ENCODE measurements at regions of chr7 and their contacts with region 1.

Region 1: GRCh38 chr7:73667344-73668102 is at the start of gene VPS37D:
- DNase-seq: peak; percentile 96
- ATAC-seq: peak; percentile 94
- H3K4me3 Mint-ChIP-seq: peak within 1 kb of the TSS; percentile 57
- H3K27ac Mint-ChIP-seq: no peak within 1 kb of the TSS
- H3K4me1 Mint-ChIP-seq: peaks cover 5% of the 10 kb centered on the region
- H3K27me3 Mint-ChIP-seq: peaks cover 40% of the 10 kb centered on the region
- total RNA-seq, gene VPS37D: 0.35 to 0.39 TPM

Region 2: DNA sequence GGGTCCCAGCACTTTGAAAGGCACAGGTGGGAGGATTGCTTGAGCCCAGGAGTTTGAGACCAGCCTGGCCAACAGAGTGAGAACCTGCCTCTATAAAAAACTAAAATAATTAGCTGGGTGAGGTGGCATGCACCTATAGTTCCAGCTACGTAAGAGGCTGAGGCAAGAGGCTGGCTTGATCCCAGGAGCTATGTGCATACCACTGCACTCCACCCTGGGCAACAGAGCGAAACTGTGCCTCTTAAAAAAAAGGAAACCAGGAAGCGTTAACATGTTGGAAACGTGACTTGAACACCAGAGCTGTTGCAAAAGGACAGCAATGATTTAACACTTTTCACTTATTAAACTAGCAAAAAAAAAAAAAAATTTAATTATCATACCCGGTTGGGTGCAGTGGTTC is 158.1 kb before region 1 on chr7:
- CTCF ChIA-PET with region 1: no interaction called
- POLR2A ChIA-PET with region 1: no interaction called
- intact Hi-C with region 1: no loop called
- DNase-seq: no peak
- ATAC-seq: no peak
- H3K4me3 Mint-ChIP-seq: no peak overlapping the region
- H3K27ac Mint-ChIP-seq: no peak overlapping the region
- H3K4me1 Mint-ChIP-seq: peaks cover 17% of the 10 kb centered on the region
- H3K27me3 Mint-ChIP-seq: no peaks in the 10 kb centered on the region

Region 3: DNA sequence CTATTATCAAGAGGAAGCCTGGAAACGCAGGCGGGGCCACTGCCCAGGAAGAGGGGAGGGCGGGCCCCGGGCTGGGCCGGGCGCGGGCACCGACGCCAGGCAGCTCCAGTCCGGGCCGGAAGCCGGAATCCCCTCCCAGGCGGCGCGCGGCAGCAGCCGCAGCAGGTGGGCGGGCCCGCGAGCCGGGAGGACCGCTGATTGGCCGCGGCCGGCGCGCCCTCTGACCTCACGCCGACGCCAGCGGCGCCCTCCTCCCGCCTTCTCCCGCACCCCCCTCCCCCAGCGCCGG is 110.5 kb before region 1 on chr7:
- CTCF ChIA-PET with region 1: interaction called, 3 read pairs
- POLR2A ChIA-PET with region 1: no interaction called
- intact Hi-C with region 1: loop called in 1 of 2 experiments (anchors 1 kb)
- DNase-seq: peak; percentile 95
- ATAC-seq: peak; percentile 92
- H3K4me3 Mint-ChIP-seq: peak overlapping the region; percentile 93
- H3K27ac Mint-ChIP-seq: peak overlapping the region; percentile 91
- H3K4me1 Mint-ChIP-seq: peaks cover 35% of the 10 kb centered on the region
- H3K27me3 Mint-ChIP-seq: no peaks in the 10 kb centered on the region

Region 4: DNA sequence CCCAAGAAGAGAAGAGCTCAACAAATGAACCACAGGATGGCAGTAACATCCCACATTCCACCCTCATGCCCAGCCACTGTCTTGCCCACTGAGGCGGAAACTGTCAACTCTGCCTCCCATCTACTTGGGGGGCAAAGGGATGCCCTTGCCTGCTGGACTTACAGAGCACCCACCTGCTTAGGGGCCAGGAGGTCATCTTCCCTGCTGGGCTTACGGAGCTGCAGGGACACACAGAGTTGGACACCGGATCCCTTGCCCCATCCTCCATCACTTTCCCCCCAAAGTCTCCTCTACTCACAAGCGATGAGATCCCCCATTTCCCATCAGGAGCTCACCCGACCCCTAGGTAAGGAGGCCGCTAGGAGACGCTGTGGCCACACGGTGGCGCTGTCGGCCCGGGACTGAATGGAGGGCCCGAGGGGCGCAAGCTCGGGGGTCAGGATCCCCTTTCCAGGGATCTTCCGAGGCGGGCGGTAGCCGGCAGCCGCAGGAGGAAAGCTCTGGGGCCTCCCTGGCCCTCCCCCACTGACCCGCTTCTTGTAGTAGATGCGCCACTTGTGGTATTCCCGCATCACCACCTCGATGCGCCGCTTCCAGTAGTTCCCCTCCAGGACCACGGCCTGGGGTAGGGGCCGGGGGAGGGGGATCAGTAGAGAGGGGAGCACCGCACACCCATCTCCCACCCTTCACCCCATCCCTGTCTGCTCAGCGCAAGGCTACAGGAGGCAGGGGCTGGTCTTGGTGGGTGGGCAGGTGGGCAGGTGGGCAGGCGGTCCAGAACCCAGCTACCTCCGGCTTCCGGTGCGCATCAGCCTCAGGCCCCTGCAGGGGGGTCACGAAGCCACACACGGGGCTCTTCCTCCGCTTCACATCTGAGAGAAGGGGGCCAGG is 60.5 kb before region 1 on chr7:
- CTCF ChIA-PET with region 1: interaction called, 19 read pairs
- POLR2A ChIA-PET with region 1: no interaction called
- intact Hi-C with region 1: loop called (anchors 1 to 5 kb)
- DNase-seq: peak; percentile 80
- ATAC-seq: peak; percentile 83
- H3K4me3 Mint-ChIP-seq: no peak overlapping the region
- H3K27ac Mint-ChIP-seq: no peak overlapping the region
- H3K4me1 Mint-ChIP-seq: no peaks in the 10 kb centered on the region
- H3K27me3 Mint-ChIP-seq: peaks cover 10% of the 10 kb centered on the region

Region 5: GRCh38 chr7:73623798-73624668 is 43.5 kb before region 1 on chr7 and contains the start of gene MLXIPL:
- CTCF ChIA-PET with region 1: interaction called, 4 read pairs
- POLR2A ChIA-PET with region 1: no interaction called
- intact Hi-C with region 1: loop called in 1 of 2 experiments (anchors 1 kb)
- DNase-seq: peak; percentile 85
- ATAC-seq: peak; percentile 95
- H3K4me3 Mint-ChIP-seq: no peak within 1 kb of the TSS
- H3K27ac Mint-ChIP-seq: no peak within 1 kb of the TSS
- H3K4me1 Mint-ChIP-seq: peaks cover 8% of the 10 kb centered on the region
- H3K27me3 Mint-ChIP-seq: peaks cover 43% of the 10 kb centered on the region
- total RNA-seq, gene MLXIPL: not detected

Region 6: GRCh38 chr7:73638911-73639310 is 28.6 kb before region 1 on chr7:
- CTCF ChIA-PET with region 1: no interaction called
- POLR2A ChIA-PET with region 1: no interaction called
- intact Hi-C with region 1: loop called in 1 of 2 experiments (anchors 1 kb)
- DNase-seq: no peak
- ATAC-seq: no peak
- H3K4me3 Mint-ChIP-seq: no peak overlapping the region
- H3K27ac Mint-ChIP-seq: no peak overlapping the region
- H3K4me1 Mint-ChIP-seq: peaks cover 4% of the 10 kb centered on the region
- H3K27me3 Mint-ChIP-seq: peaks cover 13% of the 10 kb centered on the region

Region 7: GRCh38 chr7:73683056-73683964 is 15.8 kb after region 1 on chr7 and contains the starts of genes BUD23 and DNAJC30:
- CTCF ChIA-PET with region 1: interaction called, 3 read pairs
- POLR2A ChIA-PET with region 1: no interaction called
- intact Hi-C with region 1: loop called in 1 of 2 experiments (anchors 1 kb)
- DNase-seq: peak; percentile 99
- ATAC-seq: peak; percentile 98
- H3K4me3 Mint-ChIP-seq: peak within 1 kb of the TSS; percentile 89
- H3K27ac Mint-ChIP-seq: peak within 1 kb of the TSS; percentile 96
- H3K4me1 Mint-ChIP-seq: peaks cover 41% of the 10 kb centered on the region
- H3K27me3 Mint-ChIP-seq: no peaks in the 10 kb centered on the region
- total RNA-seq, gene BUD23: 71.4 to 95.5 TPM
- total RNA-seq, gene DNAJC30: 6.9 to 7.8 TPM

Region 8: GRCh38 chr7:73842247-73842895 is 174.8 kb after region 1 on chr7 and contains the start of gene METTL27:
- CTCF ChIA-PET with region 1: interaction called, 3 read pairs
- POLR2A ChIA-PET with region 1: no interaction called
- intact Hi-C with region 1: loop called in 1 of 2 experiments (anchors 5 kb)
- DNase-seq: peak; percentile 96
- ATAC-seq: peak; percentile 100
- H3K4me3 Mint-ChIP-seq: peak within 1 kb of the TSS; percentile 75
- H3K27ac Mint-ChIP-seq: peak within 1 kb of the TSS; percentile 69
- H3K4me1 Mint-ChIP-seq: peaks cover 7% of the 10 kb centered on the region
- H3K27me3 Mint-ChIP-seq: no peaks in the 10 kb centered on the region
- total RNA-seq, gene METTL27: 2.1 to 2.2 TPM

Measured in activated CD4-positive, alpha-beta T cell treated with anti-CD3 and anti-CD28 coated beads for 36 hours (primary cell).